Panc1 (cell line): ENCODE measurements at regions of chr2 and their contacts with region 1.

Region 1: GRCh38 chr2:96238266-96238665 is 27.5 kb downstream of the TMEM127 start:
- DNase-seq: no peak
- ATAC-seq: no peak
- H3K4me3 ChIP-seq: no peak overlapping the region
- H3K27ac ChIP-seq: no peak overlapping the region
- H3K4me1 ChIP-seq: no peaks in the 10 kb centered on the region
- H3K27me3 ChIP-seq: no peaks in the 10 kb centered on the region
- CTCF ChIP-seq: no peak

Region 2: GRCh38 chr2:96265840-96266679 is 27.8 kb after region 1 on chr2 and contains the starts of genes CIAO1 and TMEM127:
- CTCF ChIA-PET with region 1: interaction called, 3 read pairs
- POLR2A ChIA-PET with region 1: interaction called, 10 read pairs
- in situ Hi-C with region 1: no loop called
- intact Hi-C with region 1: no loop called
- DNase-seq: peak; percentile 74
- ATAC-seq: peak; percentile 98
- H3K4me3 ChIP-seq: peak within 1 kb of the TSS; percentile 61 to 94
- H3K27ac ChIP-seq: peak within 1 kb of the TSS; percentile 77
- H3K4me1 ChIP-seq: peaks cover 27% of the 10 kb centered on the region
- H3K27me3 ChIP-seq: no peaks in the 10 kb centered on the region
- CTCF ChIP-seq: no peak
- total RNA-seq, gene CIAO1: 85.5 TPM
- total RNA-seq, gene TMEM127: 63.1 TPM